Aorta (tissue), 5 donors: ENCODE measurements at regions of chr9 and their contacts with region 1.

Region 1: DNA sequence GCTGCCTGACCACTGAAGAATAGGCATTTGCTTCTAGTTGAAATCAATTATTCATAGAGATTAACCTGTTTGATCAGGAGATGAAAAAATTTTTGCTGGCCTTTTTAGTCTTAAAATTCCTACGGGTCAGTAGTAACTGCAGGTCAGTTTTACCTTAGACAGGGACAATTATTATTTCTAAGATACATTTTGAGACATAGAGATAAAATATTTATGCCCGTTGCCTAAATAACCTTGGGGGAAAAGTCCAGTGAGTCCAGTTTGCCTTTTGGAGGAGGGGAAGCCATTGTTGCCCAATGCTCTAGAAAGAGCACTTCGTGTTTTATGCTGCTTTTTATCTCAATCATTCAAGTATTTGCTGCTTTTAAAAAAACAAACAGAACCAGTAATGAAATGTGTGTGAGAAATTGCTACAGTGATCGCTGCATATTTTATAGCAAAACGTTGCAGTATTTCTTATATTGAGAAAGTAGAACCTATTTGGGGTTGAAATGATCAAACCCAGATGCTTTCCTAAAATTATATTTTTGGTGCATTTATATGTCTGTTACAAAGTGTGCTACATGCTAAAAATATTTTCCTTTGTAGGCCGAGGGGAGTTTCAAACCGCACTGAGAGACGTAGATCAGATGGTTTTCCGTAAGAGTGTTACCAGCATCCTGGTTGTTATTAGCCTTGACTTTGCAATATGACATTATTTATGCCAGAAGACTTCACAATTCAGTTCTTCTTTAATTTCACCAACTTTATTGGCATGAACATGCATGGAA is 266.8 kb downstream of the AOPEP start:
- DNase-seq: no peak
- ATAC-seq: peak; percentile 4
- H3K4me3 ChIP-seq: no peak overlapping the region
- H3K27ac ChIP-seq: peak overlapping the region; percentile 80 to 100
- H3K4me1 ChIP-seq: peaks cover 5 to 8% of the 10 kb centered on the region in 2 donors
- H3K27me3 ChIP-seq: no peaks in the 10 kb centered on the region

Region 2: DNA sequence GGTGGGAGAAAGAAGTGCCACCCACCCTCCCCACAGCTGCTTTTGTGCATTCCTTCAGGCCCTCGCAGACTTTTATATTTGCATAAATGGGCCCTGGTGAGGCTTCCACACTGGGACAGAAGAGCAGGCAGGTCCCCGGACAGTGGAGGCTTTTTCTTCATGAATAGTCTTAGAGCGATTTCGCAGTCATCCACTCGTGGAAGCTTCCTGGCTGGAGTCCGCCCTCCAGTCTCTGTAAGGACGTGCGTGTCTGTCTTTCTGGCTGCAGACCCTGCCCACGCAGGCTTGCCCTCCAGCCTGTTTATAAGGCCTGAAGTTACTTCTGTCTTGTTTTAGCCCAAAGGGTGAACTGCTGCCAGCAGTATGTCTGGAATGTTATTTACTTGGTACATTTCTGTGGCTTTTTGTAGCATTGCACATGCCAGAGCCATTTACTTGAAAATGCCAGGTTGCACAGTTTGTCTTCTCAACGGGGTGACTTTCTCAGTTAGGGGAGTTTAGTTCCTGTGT is 71.1 kb before region 1 on chr9:
- intact Hi-C with region 1: loop called in 1 of 2 experiments (anchors 5 kb)
- DNase-seq: peak; percentile 87
- ATAC-seq: peak; percentile 53
- H3K4me3 ChIP-seq: no peak overlapping the region
- H3K27ac ChIP-seq: peak overlapping the region; percentile 100
- H3K4me1 ChIP-seq: peaks cover 13% of the 10 kb centered on the region in 2 donors
- H3K27me3 ChIP-seq: no peaks in the 10 kb centered on the region

Region 3: GRCh38 chr9:94952565-94953373 is 40.5 kb before region 1 on chr9:
- intact Hi-C with region 1: loop called in 1 of 2 experiments (anchors 5 kb)
- DNase-seq: peak in 1 of 2 donors; percentile 51
- ATAC-seq: peak; percentile 79
- H3K4me3 ChIP-seq: no peak overlapping the region
- H3K27ac ChIP-seq: peak overlapping the region; percentile 90 to 95
- H3K4me1 ChIP-seq: peaks cover 4 to 11% of the 10 kb centered on the region in 2 donors
- H3K27me3 ChIP-seq: no peaks in the 10 kb centered on the region